Activated CD4-positive, alpha-beta memory T cell treated with anti-CD3 and anti-CD28 coated beads for 36 hours (primary cell): ENCODE measurements at regions of chr16 and their contacts with region 1.

Region 1: GRCh38 chr16:67521095-67521804 is 7.4 kb upstream of the RIPOR1 start:
- DNase-seq: peak; percentile 99
- H3K4me3 Mint-ChIP-seq: peak overlapping the region; percentile 82
- H3K27ac Mint-ChIP-seq: peak overlapping the region; percentile 95
- H3K4me1 Mint-ChIP-seq: peaks cover 8% of the 10 kb centered on the region
- H3K27me3 Mint-ChIP-seq: no peaks in the 10 kb centered on the region

Region 2: GRCh38 chr16:67349172-67349571 is 172.1 kb before region 1 on chr16:
- CTCF ChIA-PET with region 1: no interaction called
- POLR2A ChIA-PET with region 1: no interaction called
- intact Hi-C with region 1: no loop called
- DNase-seq: no peak
- H3K4me3 Mint-ChIP-seq: no peak overlapping the region
- H3K27ac Mint-ChIP-seq: no peak overlapping the region
- H3K4me1 Mint-ChIP-seq: no peaks in the 10 kb centered on the region
- H3K27me3 Mint-ChIP-seq: peaks cover 4% of the 10 kb centered on the region

Region 3: DNA sequence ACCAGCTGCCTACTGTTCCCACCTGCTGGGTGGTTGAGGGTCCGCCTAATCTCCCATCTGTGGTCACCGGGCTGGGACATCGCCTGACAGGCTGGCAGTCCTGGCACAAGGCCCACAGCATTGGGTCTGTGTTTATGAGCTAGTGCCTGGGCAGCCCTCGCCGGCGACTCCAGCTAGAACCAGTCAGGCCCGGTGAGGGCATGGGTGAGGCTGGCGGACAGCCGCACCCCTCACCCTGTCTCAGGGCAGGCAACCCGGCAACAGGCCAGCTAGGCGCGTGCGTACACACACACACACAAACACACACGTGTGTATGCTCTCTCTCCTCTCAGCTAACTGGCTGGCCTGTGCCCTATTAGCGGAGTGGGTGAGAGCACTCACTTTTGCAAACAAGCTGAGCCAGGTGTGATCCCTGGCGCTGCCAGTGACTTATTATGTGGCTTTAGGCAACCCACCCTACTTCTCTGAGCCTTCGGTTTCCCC is 79.9 kb before region 1 on chr16:
- CTCF ChIA-PET with region 1: no interaction called
- POLR2A ChIA-PET with region 1: no interaction called
- intact Hi-C with region 1: no loop called
- DNase-seq: no peak
- H3K4me3 Mint-ChIP-seq: no peak overlapping the region
- H3K27ac Mint-ChIP-seq: no peak overlapping the region
- H3K4me1 Mint-ChIP-seq: peaks cover 3% of the 10 kb centered on the region
- H3K27me3 Mint-ChIP-seq: no peaks in the 10 kb centered on the region

Region 4: DNA sequence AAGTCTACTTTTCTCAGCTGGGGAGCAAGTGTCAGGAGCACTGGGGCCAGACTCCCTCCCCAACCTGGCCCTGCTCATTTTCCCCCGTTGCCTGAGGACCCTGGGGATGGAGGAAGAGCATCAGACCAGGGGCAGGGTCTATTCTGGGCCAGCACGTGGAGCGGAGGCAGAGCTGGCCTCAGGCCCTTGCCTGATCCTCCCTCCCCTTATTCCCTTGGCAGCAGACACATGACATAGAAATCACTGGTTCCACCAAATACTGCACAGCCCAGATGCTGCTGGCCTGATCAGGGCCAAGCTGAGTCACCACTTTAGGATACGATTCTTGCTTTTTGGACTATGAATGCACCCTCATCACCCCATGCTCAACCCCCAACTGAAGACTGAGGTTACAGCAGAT is 22.1 kb before region 1 on chr16:
- CTCF ChIA-PET with region 1: interaction called, 128 read pairs
- POLR2A ChIA-PET with region 1: no interaction called
- intact Hi-C with region 1: loop called (anchors 1 kb)
- DNase-seq: no peak
- H3K4me3 Mint-ChIP-seq: no peak overlapping the region
- H3K27ac Mint-ChIP-seq: no peak overlapping the region
- H3K4me1 Mint-ChIP-seq: peaks cover 9% of the 10 kb centered on the region
- H3K27me3 Mint-ChIP-seq: no peaks in the 10 kb centered on the region

Region 5: GRCh38 chr16:67546761-67547422 is 25.6 kb after region 1 on chr16:
- CTCF ChIA-PET with region 1: interaction called, 60 read pairs
- POLR2A ChIA-PET with region 1: no interaction called
- intact Hi-C with region 1: no loop called
- DNase-seq: peak; percentile 81
- H3K4me3 Mint-ChIP-seq: no peak overlapping the region
- H3K27ac Mint-ChIP-seq: peak overlapping the region; percentile 89
- H3K4me1 Mint-ChIP-seq: peaks cover 34% of the 10 kb centered on the region
- H3K27me3 Mint-ChIP-seq: no peaks in the 10 kb centered on the region

Region 6: GRCh38 chr16:67613808-67614207 is 92.6 kb after region 1 on chr16:
- CTCF ChIA-PET with region 1: interaction called, 14 read pairs
- POLR2A ChIA-PET with region 1: no interaction called
- intact Hi-C with region 1: no loop called
- DNase-seq: peak; percentile 30
- H3K4me3 Mint-ChIP-seq: no peak overlapping the region
- H3K27ac Mint-ChIP-seq: no peak overlapping the region
- H3K4me1 Mint-ChIP-seq: peaks cover 5% of the 10 kb centered on the region
- H3K27me3 Mint-ChIP-seq: no peaks in the 10 kb centered on the region

Region 7: GRCh38 chr16:67660564-67661028 is 139.3 kb after region 1 on chr16 and contains the start of gene PARD6A:
- CTCF ChIA-PET with region 1: interaction called, 91 read pairs
- POLR2A ChIA-PET with region 1: no interaction called
- intact Hi-C with region 1: no loop called
- DNase-seq: peak; percentile 98
- H3K4me3 Mint-ChIP-seq: peak within 1 kb of the TSS; percentile 86
- H3K27ac Mint-ChIP-seq: peak within 1 kb of the TSS; percentile 87
- H3K4me1 Mint-ChIP-seq: peaks cover 27% of the 10 kb centered on the region
- H3K27me3 Mint-ChIP-seq: no peaks in the 10 kb centered on the region
- total RNA-seq, gene PARD6A: 11.2 to 11.5 TPM

Region 8: GRCh38 chr16:67679935-67680897 is 159.0 kb after region 1 on chr16:
- CTCF ChIA-PET with region 1: interaction called, 16 read pairs
- POLR2A ChIA-PET with region 1: no interaction called
- intact Hi-C with region 1: no loop called
- DNase-seq: no peak
- H3K4me3 Mint-ChIP-seq: no peak overlapping the region
- H3K27ac Mint-ChIP-seq: no peak overlapping the region
- H3K4me1 Mint-ChIP-seq: peaks cover 7% of the 10 kb centered on the region
- H3K27me3 Mint-ChIP-seq: no peaks in the 10 kb centered on the region

Region 9: GRCh38 chr16:67746846-67747245 is 225.6 kb after region 1 on chr16:
- CTCF ChIA-PET with region 1: no interaction called
- POLR2A ChIA-PET with region 1: no interaction called
- intact Hi-C with region 1: no loop called
- DNase-seq: no peak
- H3K4me3 Mint-ChIP-seq: no peak overlapping the region
- H3K27ac Mint-ChIP-seq: no peak overlapping the region
- H3K4me1 Mint-ChIP-seq: no peaks in the 10 kb centered on the region
- H3K27me3 Mint-ChIP-seq: no peaks in the 10 kb centered on the region

Region 10: GRCh38 chr16:67928561-67929364 is 407.5 kb after region 1 on chr16:
- CTCF ChIA-PET with region 1: interaction called, 4 read pairs
- POLR2A ChIA-PET with region 1: no interaction called
- intact Hi-C with region 1: loop called (anchors 5 kb)
- DNase-seq: peak; percentile 87
- H3K4me3 Mint-ChIP-seq: no peak overlapping the region
- H3K27ac Mint-ChIP-seq: no peak overlapping the region
- H3K4me1 Mint-ChIP-seq: peaks cover 4% of the 10 kb centered on the region
- H3K27me3 Mint-ChIP-seq: no peaks in the 10 kb centered on the region

Region 11: GRCh38 chr16:67951485-67951884 is 430.2 kb after region 1 on chr16:
- CTCF ChIA-PET with region 1: no interaction called
- POLR2A ChIA-PET with region 1: no interaction called
- intact Hi-C with region 1: no loop called
- DNase-seq: no peak
- H3K4me3 Mint-ChIP-seq: no peak overlapping the region
- H3K27ac Mint-ChIP-seq: no peak overlapping the region
- H3K4me1 Mint-ChIP-seq: peaks cover 2% of the 10 kb centered on the region
- H3K27me3 Mint-ChIP-seq: no peaks in the 10 kb centered on the region